Activated CD8-positive, alpha-beta T cell treated with anti-CD3 and anti-CD28 coated beads, Interleukin-2, amount 10 ng/mL, durations not matched to agents 7 days and 5 days (primary cell): ENCODE measurements at regions of chr19 and their contacts with region 1.

Region 1: DNA sequence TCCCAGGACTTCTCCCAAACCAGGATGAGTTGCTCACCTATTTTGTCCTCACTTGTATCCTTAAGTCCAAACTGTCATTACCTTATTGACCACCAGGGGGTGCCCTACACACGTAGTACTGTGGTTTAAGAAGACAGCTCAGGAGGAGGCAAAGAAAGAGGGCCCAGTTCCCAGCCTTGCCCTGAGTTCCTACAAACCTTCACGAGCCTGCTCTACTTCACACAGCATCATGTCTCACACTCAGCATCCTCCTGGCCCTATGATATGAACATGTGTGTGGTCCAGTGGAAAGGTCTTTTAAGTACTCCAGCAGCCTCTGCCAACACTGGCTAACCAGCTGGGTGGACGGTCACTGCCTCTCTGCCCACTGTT is 8.1 kb upstream of the ZNF784 start:
- DNase-seq: peak; percentile 95
- ATAC-seq: peak; percentile 42
- H3K4me3 Mint-ChIP-seq: no peak overlapping the region
- H3K27ac Mint-ChIP-seq: peak overlapping the region; percentile 56
- H3K4me1 Mint-ChIP-seq: peaks cover 53% of the 10 kb centered on the region
- H3K27me3 Mint-ChIP-seq: peaks cover 9% of the 10 kb centered on the region

Region 2: GRCh38 chr19:55516878-55517620 is 115.4 kb before region 1 on chr19:
- CTCF ChIA-PET with region 1: interaction called, 28 read pairs
- POLR2A ChIA-PET with region 1: interaction called, 3 read pairs
- DNase-seq: peak; percentile 93
- ATAC-seq: peak; percentile 100
- H3K4me3 Mint-ChIP-seq: peak overlapping the region; percentile 49
- H3K27ac Mint-ChIP-seq: peak overlapping the region; percentile 73
- H3K4me1 Mint-ChIP-seq: peaks cover 5% of the 10 kb centered on the region
- H3K27me3 Mint-ChIP-seq: no peaks in the 10 kb centered on the region

Region 3: DNA sequence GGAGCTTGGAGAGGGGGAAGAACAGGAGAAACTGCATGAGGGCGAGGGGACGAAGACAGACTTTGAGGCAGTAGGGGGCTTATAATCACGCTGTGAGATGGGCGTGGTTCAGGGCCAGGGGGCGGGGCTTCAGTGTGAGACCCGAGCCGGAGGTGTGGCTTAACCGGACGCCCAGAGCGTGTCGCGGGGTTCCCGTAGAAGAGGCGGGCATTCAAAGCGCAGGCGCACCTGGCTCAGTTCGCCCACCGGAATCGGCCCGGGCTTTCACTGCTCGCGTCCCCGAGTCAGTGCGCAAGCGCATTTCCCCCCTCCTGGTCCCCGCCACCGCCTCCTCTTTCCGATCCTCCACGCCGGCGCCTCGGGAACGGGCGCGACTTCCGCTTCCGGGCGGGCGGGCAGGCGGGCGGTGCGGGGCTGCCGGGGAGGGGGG is 27.2 kb before region 1 on chr19:
- CTCF ChIA-PET with region 1: interaction called, 59 read pairs
- POLR2A ChIA-PET with region 1: interaction called, 3 read pairs
- DNase-seq: peak; percentile 99
- ATAC-seq: peak; percentile 84
- H3K4me3 Mint-ChIP-seq: peak overlapping the region; percentile 83
- H3K27ac Mint-ChIP-seq: peak overlapping the region; percentile 94
- H3K4me1 Mint-ChIP-seq: peaks cover 61% of the 10 kb centered on the region
- H3K27me3 Mint-ChIP-seq: no peaks in the 10 kb centered on the region

Region 4: DNA sequence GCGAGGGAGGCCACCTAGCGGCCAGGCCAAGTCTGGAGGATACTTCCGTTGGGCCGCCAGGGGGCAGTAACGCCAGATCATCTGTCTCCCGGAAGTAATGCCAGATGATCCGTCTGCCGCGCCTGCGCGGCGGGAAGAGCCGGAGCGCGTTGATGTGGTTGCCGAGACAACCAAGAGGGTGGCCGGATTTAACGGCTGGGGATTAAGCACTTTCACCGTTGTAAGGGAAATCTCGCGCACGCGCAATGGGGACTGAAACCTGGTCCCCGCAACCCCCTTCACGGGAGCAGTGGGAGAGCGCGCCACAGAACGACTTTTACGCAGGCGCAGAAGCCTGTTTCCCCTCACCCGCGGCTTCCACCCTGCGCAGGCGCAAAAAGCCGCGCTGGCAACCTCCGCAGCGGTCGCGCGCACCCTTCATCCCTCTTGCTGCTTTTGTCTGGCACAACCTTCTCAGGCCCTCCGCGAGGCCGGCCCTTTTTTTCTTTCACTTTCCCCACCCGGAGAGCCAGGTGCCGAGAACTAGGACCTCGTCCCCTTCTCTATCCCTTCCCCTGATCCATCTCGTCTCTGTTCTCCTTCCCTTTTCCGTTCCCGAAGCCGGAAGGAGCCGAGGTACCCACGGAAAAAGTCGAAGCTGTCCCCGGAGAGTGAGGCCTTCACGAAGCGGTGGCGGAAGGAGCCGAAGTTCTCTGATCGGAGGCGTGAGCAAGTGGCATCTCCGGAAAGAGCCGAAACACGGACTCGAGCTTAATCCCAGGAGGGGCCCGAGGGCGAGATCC is 21.5 kb after region 1 on chr19:
- CTCF ChIA-PET with region 1: interaction called, 39 read pairs
- POLR2A ChIA-PET with region 1: interaction called, 4 read pairs
- DNase-seq: peak; percentile 100
- ATAC-seq: peak; percentile 83
- H3K4me3 Mint-ChIP-seq: peak overlapping the region; percentile 83
- H3K27ac Mint-ChIP-seq: peak overlapping the region; percentile 94
- H3K4me1 Mint-ChIP-seq: peaks cover 42% of the 10 kb centered on the region
- H3K27me3 Mint-ChIP-seq: no peaks in the 10 kb centered on the region

Region 5: DNA sequence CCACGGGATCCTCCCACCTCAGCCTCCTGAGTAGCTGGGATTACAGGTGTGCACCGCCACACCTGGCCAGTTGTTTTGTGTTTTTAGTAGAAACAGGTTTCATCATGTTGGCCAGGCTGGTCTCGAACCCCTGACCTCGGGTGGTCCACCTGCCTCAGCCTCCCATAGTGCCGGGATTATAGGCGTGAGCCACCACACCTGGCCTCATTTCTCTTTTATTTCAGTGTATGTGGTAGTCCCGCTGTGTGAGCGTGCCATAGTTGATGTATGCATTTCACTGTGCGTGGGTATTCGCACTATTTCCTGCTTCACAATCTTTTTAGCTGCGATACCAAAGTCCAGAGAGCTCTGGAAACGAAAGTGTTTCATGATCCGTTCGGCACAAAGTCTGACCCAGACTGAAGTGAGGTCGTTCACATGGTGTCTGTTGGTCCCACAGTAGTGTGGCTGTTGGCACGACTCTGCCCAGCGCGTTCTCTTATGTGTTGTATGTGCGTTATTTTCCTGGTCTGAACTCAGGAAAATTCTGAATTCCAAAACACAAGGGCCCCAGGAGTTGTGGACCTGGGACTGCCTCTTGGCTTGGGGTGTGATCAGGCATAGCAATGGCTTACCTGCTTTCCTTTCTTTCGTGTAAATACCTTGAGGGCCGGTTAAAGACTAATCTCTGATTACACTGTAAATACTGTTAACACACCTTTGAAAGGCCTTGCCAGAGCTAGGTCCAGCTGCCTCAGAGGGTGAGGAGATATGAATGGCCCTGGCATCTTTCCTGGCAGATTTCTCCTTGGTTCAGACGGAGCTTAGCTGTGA is 51.2 kb after region 1 on chr19:
- CTCF ChIA-PET with region 1: no interaction called
- POLR2A ChIA-PET with region 1: no interaction called
- DNase-seq: no peak
- ATAC-seq: no peak
- H3K4me3 Mint-ChIP-seq: no peak overlapping the region
- H3K27ac Mint-ChIP-seq: no peak overlapping the region
- H3K4me1 Mint-ChIP-seq: peaks cover 13% of the 10 kb centered on the region
- H3K27me3 Mint-ChIP-seq: no peaks in the 10 kb centered on the region